Caco-2 (cell line): ENCODE measurements at regions of chr18 and their contacts with region 1.

Region 1: DNA sequence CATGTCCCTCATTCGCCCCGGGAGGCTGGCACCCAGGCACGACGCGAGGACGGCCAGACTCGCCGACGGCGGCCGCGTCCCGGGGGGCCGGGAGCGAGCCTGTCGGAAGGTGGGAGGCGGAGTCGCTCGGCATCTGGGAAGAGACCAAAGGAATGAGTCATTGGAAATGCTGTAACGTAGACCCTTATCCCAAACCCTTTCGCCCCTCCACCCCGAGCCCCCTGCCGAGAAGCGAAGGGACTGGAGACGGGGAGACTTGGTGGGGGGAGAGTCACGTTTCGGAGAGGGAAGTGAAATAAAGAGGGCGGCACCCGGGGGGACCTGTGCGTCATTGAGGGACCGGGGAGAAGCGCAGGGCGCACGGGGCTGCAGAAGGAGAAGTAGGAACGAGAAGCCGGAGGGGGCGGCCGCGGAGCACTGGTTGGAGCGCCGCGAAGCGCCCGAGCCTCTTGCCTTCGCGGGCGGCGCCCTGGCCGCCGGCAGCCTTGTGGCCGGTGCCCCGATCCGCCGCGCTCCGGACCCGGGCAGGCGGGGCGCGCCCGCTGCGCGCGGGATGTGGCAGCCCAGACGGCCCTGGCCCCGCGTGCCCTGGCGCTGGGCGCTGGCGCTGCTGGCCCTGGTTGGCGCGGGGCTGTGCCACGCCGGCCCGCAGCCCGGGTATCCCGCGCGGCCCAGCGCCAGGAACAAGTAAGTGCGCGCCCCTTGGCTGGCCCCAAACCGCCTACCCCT is at the start of gene EMILIN2:
- DNase-seq: peak; percentile 55 to 70
- H3K4me3 ChIP-seq: peak within 1 kb of the TSS; percentile 80
- H3K4me3 Mint-ChIP-seq: peak within 1 kb of the TSS; percentile 99
- H3K27ac Mint-ChIP-seq: peak within 1 kb of the TSS; percentile 89
- H3K4me1 ChIP-seq: peaks cover 5% of the 10 kb centered on the region; the same call in 1 of the 2 replicates
- H3K4me1 Mint-ChIP-seq: peaks cover 13% of the 10 kb centered on the region
- H3K27me3 ChIP-seq: no peaks in the 10 kb centered on the region
- H3K27me3 Mint-ChIP-seq: no peaks in the 10 kb centered on the region
- CTCF ChIP-seq: no peak
- total RNA-seq, gene EMILIN2: 41.6 and 53.4 TPM in 2 replicates

Region 2: DNA sequence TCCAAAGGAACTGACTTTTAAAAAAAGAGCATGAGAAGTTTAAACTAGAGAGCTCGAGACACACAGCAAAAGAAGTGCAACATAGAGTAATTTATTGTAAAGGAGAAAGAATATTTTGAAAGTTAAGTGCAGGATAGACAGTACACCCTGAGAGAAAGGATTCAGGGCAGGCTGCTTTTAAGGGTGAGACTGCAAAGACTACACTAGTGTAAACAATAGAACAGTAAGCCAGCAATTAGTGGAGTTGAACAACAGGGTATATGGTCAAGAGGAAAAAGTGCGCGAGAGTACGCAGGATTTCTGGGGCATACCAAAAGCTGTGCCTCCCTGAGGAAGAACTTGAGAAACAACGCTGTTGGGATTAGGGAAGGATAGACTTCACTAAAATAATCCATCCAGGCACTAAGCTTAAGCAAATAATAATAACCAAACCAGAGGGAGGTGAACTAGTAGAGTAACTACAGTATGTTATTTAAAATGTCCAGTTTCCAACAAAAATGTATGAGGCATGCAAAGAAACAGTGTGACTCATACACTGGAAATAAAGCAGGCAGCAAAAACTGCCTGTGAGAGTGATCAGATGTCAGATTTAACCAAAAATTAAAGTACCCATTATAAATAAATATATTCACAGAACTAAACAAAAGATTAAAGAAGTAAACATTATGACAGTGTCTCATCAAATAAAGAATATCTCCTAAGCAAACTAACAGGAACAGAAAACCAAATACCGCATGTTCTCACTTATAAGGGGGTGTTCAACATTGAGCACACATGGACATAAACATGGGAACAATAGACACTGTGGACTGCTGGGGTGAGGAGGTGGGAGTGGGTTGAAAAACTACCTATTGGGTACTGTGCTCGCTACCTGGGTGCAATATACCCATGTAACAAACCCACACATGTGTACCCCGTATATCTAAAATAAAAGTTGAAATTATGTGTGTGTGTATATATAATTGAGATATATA is 40.5 kb before region 1 on chr18:
- CTCF ChIA-PET with region 1: no interaction called
- POLR2A ChIA-PET with region 1: no interaction called
- intact Hi-C with region 1: loop called (anchors 5 kb)
- DNase-seq: no peak
- H3K4me3 ChIP-seq: no peak overlapping the region
- H3K4me3 Mint-ChIP-seq: no peak overlapping the region
- H3K27ac Mint-ChIP-seq: no peak overlapping the region
- H3K4me1 ChIP-seq: no peaks in the 10 kb centered on the region
- H3K4me1 Mint-ChIP-seq: peaks cover 9% of the 10 kb centered on the region
- H3K27me3 ChIP-seq: no peaks in the 10 kb centered on the region
- H3K27me3 Mint-ChIP-seq: no peaks in the 10 kb centered on the region
- CTCF ChIP-seq: no peak

Region 3: DNA sequence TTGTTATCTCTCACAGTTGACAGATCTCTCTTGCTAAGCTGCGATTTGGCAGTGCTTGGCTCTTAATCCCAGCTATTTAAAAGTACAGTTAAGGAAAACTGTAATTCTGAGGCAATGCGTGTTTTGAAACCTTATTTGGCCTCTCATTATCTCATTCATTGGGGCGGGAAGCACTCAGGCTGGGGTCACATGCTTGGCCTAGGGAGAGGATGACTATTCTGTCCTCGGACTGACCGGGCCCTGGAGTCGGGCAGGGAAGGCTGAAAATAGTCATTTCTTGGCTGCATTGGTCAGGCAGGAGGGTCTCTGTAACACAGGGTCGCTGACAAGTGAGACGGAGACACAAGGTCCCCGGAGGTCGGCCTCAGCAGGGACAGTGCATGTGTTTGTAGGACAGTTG is 20.2 kb before region 1 on chr18:
- CTCF ChIA-PET with region 1: interaction called, 4 read pairs
- POLR2A ChIA-PET with region 1: interaction called, 6 read pairs
- intact Hi-C with region 1: loop called (anchors 1 kb)
- DNase-seq: peak in 1 of 2 experiments; percentile 31
- H3K4me3 ChIP-seq: no peak overlapping the region
- H3K4me3 Mint-ChIP-seq: no peak overlapping the region
- H3K27ac Mint-ChIP-seq: no peak overlapping the region
- H3K4me1 ChIP-seq: peaks cover 20% of the 10 kb centered on the region
- H3K4me1 Mint-ChIP-seq: peaks cover 26% of the 10 kb centered on the region
- H3K27me3 ChIP-seq: no peaks in the 10 kb centered on the region
- H3K27me3 Mint-ChIP-seq: no peaks in the 10 kb centered on the region
- CTCF ChIP-seq: no peak

Region 4: GRCh38 chr18:2906704-2907549 is 60.1 kb after region 1 on chr18:
- CTCF ChIA-PET with region 1: no interaction called
- POLR2A ChIA-PET with region 1: no interaction called
- intact Hi-C with region 1: loop called (anchors 2 kb)
- DNase-seq: peak in 1 of 2 experiments; percentile 73
- H3K4me3 ChIP-seq: peak overlapping the region; percentile 84
- H3K4me3 Mint-ChIP-seq: peak overlapping the region; percentile 81
- H3K27ac Mint-ChIP-seq: no peak overlapping the region
- H3K4me1 ChIP-seq: peaks cover 7% of the 10 kb centered on the region; the same call in 1 of the 2 replicates
- H3K4me1 Mint-ChIP-seq: peaks cover 8% of the 10 kb centered on the region
- H3K27me3 ChIP-seq: no peaks in the 10 kb centered on the region
- H3K27me3 Mint-ChIP-seq: no peaks in the 10 kb centered on the region
- CTCF ChIP-seq: peak in 1 of 2 experiments; percentile 49

Region 5: DNA sequence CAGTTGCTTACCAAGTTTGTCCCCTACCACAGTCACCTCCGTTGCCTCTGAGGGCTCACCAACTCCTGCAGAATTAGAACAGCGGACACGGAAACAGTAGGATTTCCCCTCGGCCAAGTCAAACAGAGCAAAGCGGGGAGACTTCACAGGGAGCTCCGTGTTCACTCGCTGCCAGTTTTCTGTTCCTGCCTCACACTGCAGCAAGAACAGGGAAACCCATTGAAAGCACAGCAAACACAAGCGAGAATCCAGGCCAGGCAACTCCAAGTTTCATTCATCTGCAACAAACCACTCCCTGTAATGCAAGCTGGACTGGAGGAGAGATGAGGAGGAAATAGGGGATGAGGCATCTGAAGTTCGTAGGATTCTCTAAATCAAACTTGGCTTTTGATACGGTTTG is 288.7 kb after region 1 on chr18:
- CTCF ChIA-PET with region 1: no interaction called
- POLR2A ChIA-PET with region 1: no interaction called
- intact Hi-C with region 1: no loop called
- DNase-seq: no peak
- H3K4me3 ChIP-seq: no peak overlapping the region
- H3K4me3 Mint-ChIP-seq: no peak overlapping the region
- H3K27ac Mint-ChIP-seq: no peak overlapping the region
- H3K4me1 ChIP-seq: peaks cover 5% of the 10 kb centered on the region
- H3K4me1 Mint-ChIP-seq: no peaks in the 10 kb centered on the region
- H3K27me3 ChIP-seq: no peaks in the 10 kb centered on the region
- H3K27me3 Mint-ChIP-seq: no peaks in the 10 kb centered on the region
- CTCF ChIP-seq: no peak